ENCODE measurements at regions of chr6 and their contacts with region 1.

Region 1: GRCh38 chr6:89080542-89081422 is at the start of gene PNRC1:
- DNase-seq: peak; percentile 89 to 98
- ATAC-seq: peak; percentile 79 to 82
- H3K4me3 ChIP-seq: peak within 1 kb of the TSS; percentile 96
- H3K27ac ChIP-seq: peak within 1 kb of the TSS; percentile 99 to 100
- H3K4me1 ChIP-seq: peaks cover 30% of the 10 kb centered on the region
- CTCF ChIP-seq: no peak
- EP300 ChIP-seq: no peak
- POLR2A ChIP-seq: peak; percentile 93
- RAD21 ChIP-seq: no peak
- polyA plus RNA-seq, gene PNRC1: 27.2 and 28.3 TPM in 2 replicates

Region 2: DNA sequence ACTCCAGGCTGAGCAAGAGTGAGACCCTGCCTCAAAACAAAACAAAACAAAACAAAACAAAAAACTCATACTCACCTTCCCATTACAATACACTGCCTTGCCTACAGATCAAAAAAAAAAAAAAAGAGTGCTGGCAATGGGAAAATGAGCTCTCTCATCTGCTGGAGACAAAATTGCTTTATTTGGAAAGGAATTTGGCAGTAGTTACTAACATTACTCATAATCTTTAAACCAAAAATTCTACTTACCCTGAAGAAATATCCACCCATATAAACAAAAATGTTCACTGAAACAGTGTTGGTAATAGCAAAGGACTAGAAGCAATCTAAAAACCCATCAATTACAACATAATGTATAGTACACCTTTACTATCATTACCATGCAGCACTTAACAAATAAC is 237.7 kb before region 1 on chr6:
- CTCF ChIA-PET with region 1: no interaction called
- POLR2A ChIA-PET with region 1: no interaction called
- DNase-seq: no peak
- ATAC-seq: no peak
- H3K4me3 ChIP-seq: no peak overlapping the region
- H3K27ac ChIP-seq: no peak overlapping the region
- H3K4me1 ChIP-seq: no peaks in the 10 kb centered on the region
- CTCF ChIP-seq: no peak
- EP300 ChIP-seq: no peak
- POLR2A ChIP-seq: no peak
- RAD21 ChIP-seq: no peak

Region 3: DNA sequence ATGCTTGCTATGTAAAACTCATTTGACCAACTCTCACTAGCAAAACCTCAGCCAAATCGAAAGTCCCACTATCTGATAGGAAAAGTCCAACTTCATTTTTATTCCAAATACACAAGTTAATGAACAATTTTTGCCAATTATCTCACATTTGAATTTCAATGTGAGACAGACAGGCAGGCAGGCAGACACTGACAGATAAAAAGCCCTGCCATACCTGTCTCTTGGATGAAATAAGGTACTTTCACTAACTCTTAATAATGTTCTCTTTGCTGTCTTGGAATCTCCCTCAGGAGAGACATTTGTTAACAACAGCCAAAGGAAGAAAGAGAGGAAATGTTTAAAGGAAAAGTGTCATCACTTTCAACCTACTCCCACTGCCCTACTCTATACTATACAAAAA is 199.3 kb before region 1 on chr6:
- CTCF ChIA-PET with region 1: no interaction called
- POLR2A ChIA-PET with region 1: no interaction called
- DNase-seq: no peak
- ATAC-seq: no peak
- H3K4me3 ChIP-seq: no peak overlapping the region
- H3K27ac ChIP-seq: no peak overlapping the region
- H3K4me1 ChIP-seq: no peaks in the 10 kb centered on the region
- CTCF ChIP-seq: no peak
- EP300 ChIP-seq: no peak
- POLR2A ChIP-seq: no peak
- RAD21 ChIP-seq: no peak

Region 4: DNA sequence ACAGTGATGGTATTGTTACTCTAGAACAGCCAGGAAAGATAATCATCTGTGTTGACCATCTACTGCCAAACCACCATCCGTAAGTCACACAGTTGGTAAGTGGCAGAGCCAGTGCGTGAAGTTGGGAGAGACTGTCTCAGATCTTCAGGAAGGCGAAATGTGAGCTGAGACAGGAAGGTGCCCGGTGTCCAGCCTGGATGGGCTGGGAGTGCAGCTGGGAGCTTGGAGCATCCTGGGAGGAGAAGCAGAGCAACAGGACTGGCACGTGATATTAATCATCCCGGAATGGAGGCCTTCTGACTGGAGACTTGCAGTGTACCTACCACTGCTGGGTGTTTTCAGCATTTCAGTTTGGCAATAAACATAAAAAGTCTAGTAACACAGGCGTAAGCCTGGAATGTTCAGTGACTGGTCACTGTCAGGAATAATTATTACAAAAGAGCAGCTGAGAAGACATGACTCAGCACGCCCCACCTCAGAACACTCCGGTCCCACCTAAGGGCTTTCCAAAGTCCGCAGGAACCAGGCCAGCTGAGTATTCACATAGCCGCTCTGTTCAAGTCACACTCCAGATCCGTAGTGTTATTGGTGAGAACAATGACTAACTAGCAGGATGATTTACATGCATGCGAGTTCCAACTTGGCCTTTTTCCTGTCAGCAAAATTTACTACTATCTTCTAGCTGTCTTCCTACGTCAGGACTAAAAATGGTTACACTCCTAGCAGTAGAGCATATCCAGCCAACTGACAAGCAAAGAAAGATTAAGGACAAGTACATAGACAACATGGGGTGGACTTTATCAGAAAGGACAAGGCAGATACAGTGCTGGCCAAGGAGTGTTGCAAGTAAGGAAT is 45.3 kb before region 1 on chr6:
- CTCF ChIA-PET with region 1: interaction called, 9 read pairs
- POLR2A ChIA-PET with region 1: interaction called, 113 read pairs
- DNase-seq: peak; percentile 51 to 93
- ATAC-seq: peak; percentile 91 to 94
- H3K4me3 ChIP-seq: peak overlapping the region; percentile 11; the same call in 1 of the 3 replicates
- H3K27ac ChIP-seq: peak overlapping the region; percentile 83 to 92
- H3K4me1 ChIP-seq: peaks cover 28% of the 10 kb centered on the region
- CTCF ChIP-seq: no peak
- EP300 ChIP-seq: peak; percentile 45 to 78; a peak in 3 of 5 replicates
- POLR2A ChIP-seq: no peak
- RAD21 ChIP-seq: no peak; a peak in 1 of 5 replicates

Region 5: GRCh38 chr6:89045011-89045387 is 35.8 kb before region 1 on chr6:
- CTCF ChIA-PET with region 1: no interaction called
- POLR2A ChIA-PET with region 1: interaction called, 38 read pairs
- DNase-seq: no peak
- ATAC-seq: no peak
- H3K4me3 ChIP-seq: no peak overlapping the region
- H3K27ac ChIP-seq: peak overlapping the region; percentile 82 to 86
- H3K4me1 ChIP-seq: peaks cover 56% of the 10 kb centered on the region
- CTCF ChIP-seq: no peak
- EP300 ChIP-seq: no peak
- POLR2A ChIP-seq: no peak
- RAD21 ChIP-seq: no peak

Region 6: DNA sequence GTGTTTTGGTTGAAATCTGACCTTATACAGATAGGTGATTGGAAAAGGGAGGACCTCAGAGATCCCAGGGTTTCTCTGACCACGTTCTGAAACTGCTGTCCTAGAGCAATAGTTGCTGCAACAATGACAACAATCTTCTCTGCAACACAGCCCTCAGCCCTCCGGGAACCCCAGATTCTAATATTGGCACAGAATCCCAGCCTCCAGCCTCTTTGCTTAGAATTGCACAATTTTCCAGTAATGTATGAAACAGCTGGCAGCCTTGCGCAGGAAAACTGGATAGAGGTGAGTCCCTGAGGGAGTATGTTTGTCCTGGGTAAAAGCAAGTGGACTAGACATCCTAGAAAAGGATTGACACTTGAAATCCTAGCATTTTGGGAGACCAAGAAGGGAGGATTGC is 30.6 kb before region 1 on chr6:
- CTCF ChIA-PET with region 1: no interaction called
- POLR2A ChIA-PET with region 1: interaction called, 38 read pairs
- DNase-seq: peak in 1 of 2 experiments; percentile 30
- ATAC-seq: peak; percentile 22 to 65
- H3K4me3 ChIP-seq: no peak overlapping the region
- H3K27ac ChIP-seq: peak overlapping the region; percentile 82 to 86
- H3K4me1 ChIP-seq: peaks cover 60% of the 10 kb centered on the region
- CTCF ChIP-seq: no peak
- EP300 ChIP-seq: no peak
- POLR2A ChIP-seq: no peak
- RAD21 ChIP-seq: no peak

Region 7: DNA sequence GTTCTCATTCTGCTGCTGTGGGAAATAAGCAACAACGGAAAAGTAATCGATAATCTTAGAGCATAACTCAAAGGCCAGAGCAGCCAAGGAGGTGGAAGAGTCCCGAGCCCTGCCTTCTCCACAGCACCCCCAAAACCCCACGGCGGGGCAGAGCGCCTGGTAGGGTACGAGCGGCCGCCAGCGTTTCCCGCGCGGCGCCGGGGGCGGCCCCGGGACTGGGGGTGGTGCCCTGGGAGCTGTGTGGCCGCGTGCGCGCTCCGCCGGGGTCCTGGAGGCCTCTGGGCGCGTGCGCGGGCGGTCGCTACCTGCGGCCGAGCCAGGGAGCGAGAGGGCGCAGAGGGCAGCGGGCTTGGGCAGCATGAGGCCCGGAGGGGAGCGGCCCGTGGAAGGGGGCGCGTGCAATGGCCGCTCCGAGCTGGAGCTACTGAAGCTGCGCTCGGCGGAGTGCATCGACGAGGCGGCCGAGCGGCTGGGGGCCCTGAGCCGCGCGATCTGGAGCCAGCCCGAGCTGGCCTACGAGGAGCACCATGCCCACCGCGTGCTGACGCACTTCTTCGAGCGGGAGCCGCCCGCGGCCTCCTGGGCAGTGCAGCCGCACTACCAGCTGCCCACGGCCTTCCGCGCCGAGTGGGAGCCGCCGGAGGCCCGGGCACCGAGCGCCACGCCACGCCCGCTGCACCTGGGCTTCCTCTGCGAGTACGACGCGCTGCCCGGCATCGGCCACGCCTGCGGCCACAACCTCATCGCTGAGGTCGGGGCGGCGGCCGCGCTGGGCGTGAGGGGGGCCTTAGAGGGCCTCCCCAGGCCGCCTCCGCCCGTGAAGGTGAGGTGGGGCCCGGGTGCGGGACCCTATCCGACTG is 65.2 kb after region 1 on chr6 and contains the start of gene PM20D2:
- CTCF ChIA-PET with region 1: interaction called, 3 read pairs
- POLR2A ChIA-PET with region 1: interaction called, 16 read pairs
- DNase-seq: peak; percentile 73 to 79
- ATAC-seq: peak; percentile 94 to 95
- H3K4me3 ChIP-seq: peak within 1 kb of the TSS; percentile 85
- H3K27ac ChIP-seq: peak within 1 kb of the TSS; percentile 96 to 99
- H3K4me1 ChIP-seq: peaks cover 34% of the 10 kb centered on the region
- CTCF ChIP-seq: no peak
- EP300 ChIP-seq: no peak
- POLR2A ChIP-seq: peak; percentile 82
- RAD21 ChIP-seq: no peak
- polyA plus RNA-seq, gene PM20D2: 17.4 and 25.4 TPM in 2 replicates

Region 8: DNA sequence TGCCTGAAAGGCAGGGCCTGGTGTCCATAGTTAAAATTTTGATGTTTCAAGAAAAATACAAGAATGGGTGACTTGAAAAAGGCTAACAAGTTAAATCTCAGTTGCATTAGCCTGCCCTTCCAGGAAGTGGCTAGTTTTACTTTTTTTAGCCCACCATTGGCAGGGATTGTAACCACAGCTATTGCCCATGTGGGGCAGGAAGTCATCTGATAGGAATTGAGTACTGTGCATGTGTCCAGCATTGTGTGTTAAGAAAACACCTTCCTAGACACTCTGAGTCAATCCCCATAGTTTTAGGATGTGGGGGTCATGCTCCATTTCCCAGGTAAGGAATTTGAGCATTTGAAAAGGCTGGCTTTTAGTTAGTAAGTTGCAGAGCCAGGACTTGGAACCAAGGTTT is 530.9 kb after region 1 on chr6:
- CTCF ChIA-PET with region 1: no interaction called
- POLR2A ChIA-PET with region 1: no interaction called
- DNase-seq: no peak
- ATAC-seq: no peak
- H3K4me3 ChIP-seq: no peak overlapping the region
- H3K27ac ChIP-seq: no peak overlapping the region
- H3K4me1 ChIP-seq: no peaks in the 10 kb centered on the region
- CTCF ChIP-seq: no peak
- EP300 ChIP-seq: no peak
- POLR2A ChIP-seq: no peak
- RAD21 ChIP-seq: no peak

Measured in A549 (cell line).